SK-N-SH (cell line): ENCODE measurements at regions of chr15 and their contacts with region 1.

Region 1: GRCh38 chr15:41465822-41466421 is 27.8 kb upstream of the ITPKA start:
- DNase-seq: peak; percentile 62
- H3K4me3 ChIP-seq: no peak overlapping the region
- H3K27ac ChIP-seq: no peak overlapping the region
- H3K4me1 ChIP-seq: no peaks in the 10 kb centered on the region
- H3K27me3 ChIP-seq: no peaks in the 10 kb centered on the region
- CTCF ChIP-seq: peak; percentile 97
- EP300 ChIP-seq: no peak
- RAD21 ChIP-seq: peak; percentile 92

Region 2: GRCh38 chr15:41443275-41443674 is 22.6 kb before region 1 on chr15:
- CTCF ChIA-PET with region 1: interaction called, 25 read pairs
- POLR2A ChIA-PET with region 1: no interaction called
- DNase-seq: no peak
- H3K4me3 ChIP-seq: no peak overlapping the region
- H3K27ac ChIP-seq: no peak overlapping the region
- H3K4me1 ChIP-seq: no peaks in the 10 kb centered on the region
- H3K27me3 ChIP-seq: no peaks in the 10 kb centered on the region
- CTCF ChIP-seq: no peak
- EP300 ChIP-seq: no peak
- RAD21 ChIP-seq: no peak

Region 3: GRCh38 chr15:41483115-41483514 is 17.2 kb after region 1 on chr15:
- CTCF ChIA-PET with region 1: interaction called, 30 read pairs
- POLR2A ChIA-PET with region 1: interaction called, 3 read pairs
- DNase-seq: no peak
- H3K4me3 ChIP-seq: no peak overlapping the region
- H3K27ac ChIP-seq: no peak overlapping the region
- H3K4me1 ChIP-seq: no peaks in the 10 kb centered on the region
- H3K27me3 ChIP-seq: no peaks in the 10 kb centered on the region
- CTCF ChIP-seq: no peak
- EP300 ChIP-seq: no peak
- RAD21 ChIP-seq: no peak

Region 4: DNA sequence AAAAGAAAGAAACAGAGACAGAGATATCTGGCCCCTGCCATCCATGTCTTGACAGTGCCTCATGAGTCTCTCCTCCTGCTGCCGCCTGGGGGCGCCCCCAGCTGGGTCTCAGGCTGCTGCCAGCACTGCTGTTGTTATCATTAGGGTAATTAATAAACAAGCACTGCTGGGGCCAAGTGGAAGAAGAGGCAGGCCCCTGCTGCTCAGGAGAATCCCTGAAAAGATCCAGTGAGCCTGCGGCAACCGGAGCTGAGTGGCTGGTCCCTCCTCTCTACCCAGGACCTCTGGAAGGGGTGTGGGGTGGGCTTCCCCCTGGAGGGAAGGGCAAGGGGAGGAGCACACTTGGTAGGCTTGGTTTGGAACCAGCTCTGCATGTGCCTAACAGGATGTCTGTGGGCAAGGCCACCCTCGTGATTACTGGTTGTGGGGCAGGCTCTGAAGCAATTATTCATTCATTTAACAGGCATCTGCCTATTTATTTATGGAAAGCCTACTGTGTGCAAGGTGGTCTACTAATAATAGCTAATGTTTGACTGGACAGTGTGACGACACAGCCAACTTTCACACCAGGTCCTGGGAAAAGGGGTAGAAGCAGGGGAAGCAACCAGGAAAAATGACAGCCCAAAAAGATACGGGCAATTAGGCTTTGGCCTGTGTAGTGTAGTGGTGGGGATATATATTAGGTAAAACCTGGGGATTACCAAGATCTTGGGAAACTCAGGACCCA is 91.9 kb after region 1 on chr15:
- CTCF ChIA-PET with region 1: interaction called, 12 read pairs
- POLR2A ChIA-PET with region 1: no interaction called
- DNase-seq: peak; percentile 89
- H3K4me3 ChIP-seq: peak overlapping the region; percentile 58 to 60
- H3K27ac ChIP-seq: peak overlapping the region; percentile 30 to 45
- H3K4me1 ChIP-seq: peaks cover 4 to 21% of the 10 kb centered on the region in 2 experiments; a peak in 3 of 4 replicates
- H3K27me3 ChIP-seq: no peaks in the 10 kb centered on the region
- CTCF ChIP-seq: peak; percentile 99
- EP300 ChIP-seq: 0 out of 4 replicates have a peak, but pooled peaks of 1 of the 2 experiments have one; percentile 17
- RAD21 ChIP-seq: peak; percentile 84

Region 5: DNA sequence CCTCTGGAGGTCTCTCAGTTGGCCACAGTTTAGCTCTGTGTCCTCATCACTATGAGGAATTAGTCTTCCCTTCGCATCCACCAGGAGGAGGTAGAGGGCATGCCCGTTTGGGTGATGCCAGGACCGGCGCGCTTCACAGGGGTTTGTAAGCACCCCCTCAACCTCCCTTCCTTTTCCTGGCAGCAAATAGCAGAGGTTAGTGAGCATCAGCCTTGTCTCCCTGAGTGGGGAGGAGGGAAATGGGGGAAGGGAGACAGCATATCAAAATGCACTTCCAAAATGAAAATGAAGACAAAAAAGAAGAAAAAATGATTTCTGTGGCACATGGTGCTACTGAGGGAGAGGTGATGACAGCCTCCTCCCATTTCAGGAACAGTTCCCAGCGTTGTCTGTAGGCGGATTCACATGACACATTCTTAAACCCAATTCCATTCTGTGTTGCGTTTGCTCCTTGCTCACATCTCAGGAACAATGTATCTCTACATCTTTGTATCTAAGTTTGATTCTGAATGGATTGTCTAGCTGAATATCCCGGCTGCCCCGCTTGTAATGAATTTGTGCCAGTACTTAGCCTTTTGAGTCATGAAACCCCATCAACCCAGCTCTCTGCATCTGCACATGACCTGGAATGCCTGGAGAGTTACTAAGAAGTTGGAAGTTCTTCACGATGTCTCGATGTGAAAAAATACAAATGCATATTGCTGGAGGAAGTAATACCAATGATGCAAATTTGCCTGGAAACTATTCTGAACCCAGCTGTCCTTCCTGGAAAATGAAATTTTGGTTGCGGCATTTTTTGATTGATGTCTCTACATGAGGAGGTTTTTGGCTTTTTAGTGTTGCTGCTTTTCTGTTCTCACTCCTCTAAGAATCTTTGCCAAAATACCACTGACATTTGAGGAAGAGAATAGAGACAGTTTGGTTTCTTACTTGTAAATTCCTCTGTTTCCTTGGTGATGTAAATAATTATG is 138.3 kb after region 1 on chr15:
- CTCF ChIA-PET with region 1: interaction called, 19 read pairs
- POLR2A ChIA-PET with region 1: no interaction called
- DNase-seq: peak; percentile 84
- H3K4me3 ChIP-seq: peak overlapping the region; percentile 31 to 51
- H3K27ac ChIP-seq: peak overlapping the region in 1 of 2 experiments; percentile 64; a peak in 2 of 4 replicates
- H3K4me1 ChIP-seq: peaks cover 3 to 5% of the 10 kb centered on the region in 2 experiments; a peak in 3 of 4 replicates
- H3K27me3 ChIP-seq: no peaks in the 10 kb centered on the region
- CTCF ChIP-seq: peak; percentile 85
- EP300 ChIP-seq: no peak
- RAD21 ChIP-seq: peak; percentile 74